Endothelial cell of umbilical vein (primary cell): ENCODE measurements at regions of chr10 and their contacts with region 1.

Region 1: GRCh38 chr10:73096449-73097304 is at the start of gene P4HA1:
- DNase-seq: peak; percentile 99
- H3K4me3 ChIP-seq: peak within 1 kb of the TSS; percentile 73 to 99 (median 96)
- H3K27ac ChIP-seq: peak within 1 kb of the TSS; percentile 73
- H3K4me1 ChIP-seq: peaks cover 17% of the 10 kb centered on the region
- H3K27me3 ChIP-seq: no peaks in the 10 kb centered on the region
- CTCF ChIP-seq: peak; percentile 70 to 82
- POLR2A ChIP-seq: peak; percentile 98
- total RNA-seq, gene P4HA1: 29.0 and 29.1 TPM in 2 replicates

Region 2: GRCh38 chr10:72784551-72785351 is 311.9 kb before region 1 on chr10:
- CTCF ChIA-PET with region 1: no interaction called
- POLR2A ChIA-PET with region 1: no interaction called
- dilution Hi-C with region 1: no loop called
- intact Hi-C with region 1: no loop called
- DNase-seq: peak; percentile 48
- H3K4me3 ChIP-seq: no peak overlapping the region
- H3K27ac ChIP-seq: no peak overlapping the region
- H3K4me1 ChIP-seq: no peaks in the 10 kb centered on the region
- H3K27me3 ChIP-seq: no peaks in the 10 kb centered on the region
- CTCF ChIP-seq: no peak
- POLR2A ChIP-seq: no peak

Region 3: DNA sequence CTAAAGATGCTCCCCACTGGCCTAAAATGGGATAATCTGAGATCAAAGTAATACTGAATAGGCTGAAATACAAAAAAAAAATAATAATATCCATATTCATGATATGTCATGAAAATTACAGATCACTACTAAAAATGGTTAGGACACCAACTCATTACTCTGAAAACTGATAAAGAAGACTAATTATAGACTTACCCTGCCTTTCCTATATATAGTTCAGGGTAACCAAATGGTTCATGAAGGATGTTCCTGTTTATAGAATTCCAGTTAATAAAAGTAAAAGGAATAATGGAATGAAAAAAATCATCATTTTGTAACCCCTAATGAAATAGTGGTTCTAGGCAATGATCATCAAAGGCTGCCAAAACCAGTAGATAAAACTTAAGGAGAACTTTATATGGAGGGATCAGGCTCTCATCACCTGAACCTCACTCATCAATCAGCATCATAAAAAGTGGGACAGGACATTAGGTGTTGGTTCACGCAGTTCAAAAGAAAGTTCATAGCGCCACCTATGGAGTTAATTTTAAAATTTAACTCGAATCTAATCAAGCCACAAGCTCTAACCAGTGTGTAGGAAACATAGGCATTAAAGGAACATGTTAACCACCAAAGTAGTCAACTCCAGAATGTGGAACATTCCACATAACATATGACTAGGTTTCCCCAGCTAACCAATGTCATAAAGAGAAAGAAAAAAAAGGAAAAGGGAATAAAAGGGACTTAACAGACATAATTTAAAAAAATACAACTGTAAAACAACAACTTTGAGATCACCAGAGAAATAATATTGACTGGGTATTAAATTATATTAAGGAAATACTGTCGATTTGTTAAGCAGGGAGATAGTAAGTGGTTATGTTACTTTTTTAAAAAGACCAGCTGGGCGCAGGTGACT is 35.7 kb before region 1 on chr10:
- CTCF ChIA-PET with region 1: interaction called, 27 read pairs
- POLR2A ChIA-PET with region 1: interaction called, 3 read pairs
- dilution Hi-C with region 1: no loop called
- intact Hi-C with region 1: no loop called
- DNase-seq: peak; percentile 59
- H3K4me3 ChIP-seq: no peak overlapping the region
- H3K27ac ChIP-seq: no peak overlapping the region
- H3K4me1 ChIP-seq: peaks cover 9% of the 10 kb centered on the region
- H3K27me3 ChIP-seq: no peaks in the 10 kb centered on the region
- CTCF ChIP-seq: peak in 1 of 2 donors; percentile 40
- POLR2A ChIP-seq: no peak

Region 4: DNA sequence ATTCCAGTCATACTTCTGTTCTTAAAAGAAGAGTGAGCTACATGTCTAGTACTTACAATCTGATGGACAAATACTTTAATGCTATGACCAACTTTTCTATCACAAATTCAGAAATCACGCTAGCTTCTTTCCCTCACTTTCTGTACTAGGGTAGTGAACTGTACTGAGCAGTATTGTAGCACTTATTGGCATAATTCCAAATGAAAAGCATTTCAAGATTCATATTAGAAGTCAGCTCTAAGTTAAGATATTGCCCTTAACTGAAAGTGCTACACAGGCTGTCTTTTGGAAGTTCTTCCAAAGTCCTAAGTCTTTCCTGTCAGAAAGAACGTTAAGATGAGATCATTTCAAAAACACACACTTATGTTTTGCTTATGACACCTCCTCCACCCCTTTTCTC is 13.5 kb before region 1 on chr10:
- CTCF ChIA-PET with region 1: interaction called, 22 read pairs
- POLR2A ChIA-PET with region 1: interaction called, 18 read pairs
- dilution Hi-C with region 1: no loop called
- intact Hi-C with region 1: no loop called
- DNase-seq: peak; percentile 44
- H3K4me3 ChIP-seq: no peak overlapping the region
- H3K27ac ChIP-seq: no peak overlapping the region
- H3K4me1 ChIP-seq: peaks cover 7% of the 10 kb centered on the region
- H3K27me3 ChIP-seq: no peaks in the 10 kb centered on the region
- CTCF ChIP-seq: no peak
- POLR2A ChIP-seq: no peak

Region 5: GRCh38 chr10:73117976-73118743 is 21.5 kb after region 1 on chr10:
- CTCF ChIA-PET with region 1: interaction called, 9 read pairs
- POLR2A ChIA-PET with region 1: interaction called, 4 read pairs
- dilution Hi-C with region 1: no loop called
- intact Hi-C with region 1: loop called (anchors 2 kb)
- DNase-seq: peak; percentile 72
- H3K4me3 ChIP-seq: no peak overlapping the region
- H3K27ac ChIP-seq: peak overlapping the region; percentile 69
- H3K4me1 ChIP-seq: peaks cover 12% of the 10 kb centered on the region
- H3K27me3 ChIP-seq: no peaks in the 10 kb centered on the region
- CTCF ChIP-seq: no peak
- POLR2A ChIP-seq: no peak

Region 6: GRCh38 chr10:73159038-73159648 is 62.5 kb after region 1 on chr10:
- CTCF ChIA-PET with region 1: interaction called, 17 read pairs
- POLR2A ChIA-PET with region 1: interaction called, 3 read pairs
- dilution Hi-C with region 1: no loop called
- intact Hi-C with region 1: loop called (anchors 1 kb)
- DNase-seq: peak; percentile 65
- H3K4me3 ChIP-seq: no peak overlapping the region
- H3K27ac ChIP-seq: no peak overlapping the region
- H3K4me1 ChIP-seq: no peaks in the 10 kb centered on the region
- H3K27me3 ChIP-seq: no peaks in the 10 kb centered on the region
- CTCF ChIP-seq: peak; percentile 59 to 60
- POLR2A ChIP-seq: no peak